Activated CD8-positive, alpha-beta T cell treated with anti-CD3 and anti-CD28 coated beads, Interleukin-2, amount 10 ng/mL, durations not matched to agents 7 days and 5 days (primary cell): ENCODE measurements at regions of chr11 and their contacts with region 1.

Region 1: GRCh38 chr11:75406338-75406777 is 7.0 kb downstream of the RPS3 start:
- DNase-seq: no peak
- ATAC-seq: no peak
- H3K4me3 Mint-ChIP-seq: no peak overlapping the region
- H3K27ac Mint-ChIP-seq: no peak overlapping the region
- H3K4me1 Mint-ChIP-seq: peaks cover 41% of the 10 kb centered on the region
- H3K27me3 Mint-ChIP-seq: no peaks in the 10 kb centered on the region

Region 2: GRCh38 chr11:75301601-75302345 is 104.6 kb before region 1 on chr11:
- CTCF ChIA-PET with region 1: no interaction called
- POLR2A ChIA-PET with region 1: no interaction called
- DNase-seq: no peak
- ATAC-seq: no peak
- H3K4me3 Mint-ChIP-seq: no peak overlapping the region
- H3K27ac Mint-ChIP-seq: no peak overlapping the region
- H3K4me1 Mint-ChIP-seq: peaks cover 4% of the 10 kb centered on the region
- H3K27me3 Mint-ChIP-seq: no peaks in the 10 kb centered on the region

Region 3: GRCh38 chr11:75371941-75372789 is 34.2 kb before region 1 on chr11:
- CTCF ChIA-PET with region 1: no interaction called
- POLR2A ChIA-PET with region 1: no interaction called
- DNase-seq: no peak
- ATAC-seq: no peak
- H3K4me3 Mint-ChIP-seq: no peak overlapping the region
- H3K27ac Mint-ChIP-seq: no peak overlapping the region
- H3K4me1 Mint-ChIP-seq: peaks cover 43% of the 10 kb centered on the region
- H3K27me3 Mint-ChIP-seq: no peaks in the 10 kb centered on the region

Region 4: DNA sequence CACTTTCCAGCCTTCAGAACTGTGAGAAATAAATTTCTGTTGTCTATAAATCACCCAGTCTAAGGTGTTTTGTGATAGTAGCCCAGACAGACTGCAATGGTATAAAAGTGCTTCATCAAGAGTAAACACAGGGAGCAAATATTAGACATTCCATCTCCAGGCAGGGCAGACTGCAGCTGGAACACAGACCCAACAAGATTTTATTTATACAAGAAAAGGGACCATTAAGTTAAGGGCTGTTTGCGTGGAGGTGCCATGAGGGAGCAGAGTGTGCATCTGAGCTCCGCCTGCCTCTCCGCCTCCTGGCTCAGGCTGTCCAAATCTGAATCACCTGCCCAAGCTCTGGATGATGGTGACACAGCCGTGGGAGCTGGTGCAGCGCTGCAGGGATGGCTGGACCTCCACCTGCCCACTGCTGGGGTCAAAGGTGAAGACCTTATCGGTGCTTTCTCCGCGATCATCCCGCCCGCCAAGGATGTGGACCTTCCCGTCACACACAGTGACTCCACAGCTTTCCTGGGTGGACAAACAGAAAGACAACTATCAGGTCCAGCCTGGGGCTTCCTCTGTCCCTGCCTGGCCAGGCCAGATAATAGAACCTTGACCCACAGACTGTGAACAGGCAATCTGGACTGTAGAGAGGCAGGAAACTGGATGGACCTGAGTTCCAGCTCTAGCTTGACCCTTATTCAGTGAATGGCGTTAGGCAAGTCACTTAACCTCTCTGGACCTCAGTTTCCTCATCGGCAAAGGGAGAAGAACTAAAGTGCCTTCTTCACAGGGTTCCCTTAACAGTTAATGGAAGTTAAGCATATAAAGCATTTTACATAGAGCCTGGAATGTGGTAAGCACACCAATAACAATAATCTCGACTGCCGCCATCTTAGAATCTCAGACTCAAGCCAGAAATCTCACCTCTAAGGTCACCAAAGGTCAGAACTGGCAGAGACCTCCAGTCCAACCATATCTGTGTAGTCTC is 16.2 kb after region 1 on chr11:
- CTCF ChIA-PET with region 1: interaction called, 11 read pairs
- POLR2A ChIA-PET with region 1: interaction called, 3 read pairs
- DNase-seq: no peak
- ATAC-seq: no peak
- H3K4me3 Mint-ChIP-seq: no peak overlapping the region
- H3K27ac Mint-ChIP-seq: peak overlapping the region; percentile 26
- H3K4me1 Mint-ChIP-seq: no peaks in the 10 kb centered on the region
- H3K27me3 Mint-ChIP-seq: no peaks in the 10 kb centered on the region